PC-3 (cell line): ENCODE measurements at regions of chr12 and their contacts with region 1.

Region 1: DNA sequence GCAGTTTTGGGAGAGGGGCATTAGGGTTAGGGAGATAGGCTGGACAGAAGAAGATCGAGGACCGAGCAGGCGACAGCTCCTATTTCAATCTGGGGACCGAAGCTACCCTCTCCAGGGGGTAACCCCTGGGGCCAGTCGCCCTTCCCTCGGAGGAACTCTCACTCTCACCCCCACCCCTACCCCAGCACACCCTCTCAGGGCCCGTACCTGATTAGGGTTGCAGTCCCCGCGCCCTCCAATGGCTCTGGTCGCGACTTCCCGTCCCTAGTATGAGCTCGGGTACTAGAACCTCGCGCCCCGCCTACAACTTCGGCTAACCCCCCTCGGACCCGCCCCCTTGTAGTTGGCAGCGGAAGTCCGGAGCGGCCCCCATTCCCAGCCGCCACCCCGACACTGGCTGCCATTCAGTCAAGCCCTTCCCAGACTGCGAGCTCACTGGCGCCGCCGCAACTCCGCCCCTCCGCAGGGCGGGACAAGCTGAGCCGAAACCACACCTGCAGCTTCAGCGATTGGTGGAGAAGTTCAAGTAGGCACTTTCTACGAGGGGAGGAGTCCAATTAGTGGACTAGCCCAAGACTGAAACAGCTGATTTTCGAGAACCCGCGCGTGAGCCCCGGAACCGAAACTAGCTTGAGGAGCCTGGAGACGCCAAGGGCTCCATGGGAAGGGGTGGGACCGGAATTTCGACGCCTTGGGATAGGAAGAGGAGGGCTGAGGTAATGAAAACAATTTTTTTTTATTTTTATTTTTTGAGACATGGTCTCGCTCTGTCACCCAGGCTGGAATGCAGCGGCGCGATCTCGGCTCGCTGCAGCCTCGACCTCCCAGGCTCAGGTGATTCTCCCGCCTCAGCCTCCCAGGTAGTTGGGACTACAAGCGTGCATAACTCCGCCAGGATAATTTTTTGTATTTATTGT is at the start of gene STAT2:
- DNase-seq: peak; percentile 99
- ATAC-seq: peak; percentile 97
- H3K4me3 ChIP-seq: peak within 1 kb of the TSS; percentile 85
- H3K27ac ChIP-seq: peak within 1 kb of the TSS; percentile 44
- H3K4me1 ChIP-seq: peaks cover 14% of the 10 kb centered on the region
- H3K27me3 ChIP-seq: no peaks in the 10 kb centered on the region
- CTCF ChIP-seq: no peak
- total RNA-seq, gene STAT2: 68.8 and 73.1 TPM in 2 replicates

Region 2: DNA sequence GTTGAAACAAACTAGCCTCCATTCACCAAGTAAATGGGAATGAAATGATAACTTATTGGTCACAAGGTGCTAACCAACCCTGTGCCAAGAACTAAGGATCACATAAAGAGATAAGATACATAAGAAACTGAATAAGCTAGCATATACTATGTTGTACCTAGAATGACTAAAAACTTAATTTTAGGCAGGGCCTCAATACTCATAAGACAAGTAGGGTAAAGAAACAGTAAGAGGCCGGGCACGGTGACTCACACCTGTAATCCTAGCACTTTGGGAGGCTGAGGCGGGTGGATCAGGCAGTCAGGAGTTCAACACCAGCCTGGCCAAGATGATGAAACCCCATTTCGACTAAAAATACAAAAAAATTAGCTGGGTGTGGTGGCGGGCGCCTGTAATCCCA is 599.4 kb before region 1 on chr12:
- CTCF ChIA-PET with region 1: no interaction called
- POLR2A ChIA-PET with region 1: no interaction called
- intact Hi-C with region 1: no loop called
- DNase-seq: no peak
- ATAC-seq: no peak
- H3K4me3 ChIP-seq: no peak overlapping the region
- H3K27ac ChIP-seq: no peak overlapping the region
- H3K4me1 ChIP-seq: no peaks in the 10 kb centered on the region
- H3K27me3 ChIP-seq: no peaks in the 10 kb centered on the region
- CTCF ChIP-seq: no peak

Region 3: GRCh38 chr12:55829967-55830600 is 530.0 kb before region 1 on chr12:
- CTCF ChIA-PET with region 1: no interaction called
- POLR2A ChIA-PET with region 1: interaction called, 10 read pairs
- intact Hi-C with region 1: no loop called
- DNase-seq: peak; percentile 24
- ATAC-seq: peak; percentile 42
- H3K4me3 ChIP-seq: peak overlapping the region; percentile 83
- H3K27ac ChIP-seq: peak overlapping the region; percentile 66
- H3K4me1 ChIP-seq: peaks cover 24% of the 10 kb centered on the region
- H3K27me3 ChIP-seq: no peaks in the 10 kb centered on the region
- CTCF ChIP-seq: no peak

Region 4: DNA sequence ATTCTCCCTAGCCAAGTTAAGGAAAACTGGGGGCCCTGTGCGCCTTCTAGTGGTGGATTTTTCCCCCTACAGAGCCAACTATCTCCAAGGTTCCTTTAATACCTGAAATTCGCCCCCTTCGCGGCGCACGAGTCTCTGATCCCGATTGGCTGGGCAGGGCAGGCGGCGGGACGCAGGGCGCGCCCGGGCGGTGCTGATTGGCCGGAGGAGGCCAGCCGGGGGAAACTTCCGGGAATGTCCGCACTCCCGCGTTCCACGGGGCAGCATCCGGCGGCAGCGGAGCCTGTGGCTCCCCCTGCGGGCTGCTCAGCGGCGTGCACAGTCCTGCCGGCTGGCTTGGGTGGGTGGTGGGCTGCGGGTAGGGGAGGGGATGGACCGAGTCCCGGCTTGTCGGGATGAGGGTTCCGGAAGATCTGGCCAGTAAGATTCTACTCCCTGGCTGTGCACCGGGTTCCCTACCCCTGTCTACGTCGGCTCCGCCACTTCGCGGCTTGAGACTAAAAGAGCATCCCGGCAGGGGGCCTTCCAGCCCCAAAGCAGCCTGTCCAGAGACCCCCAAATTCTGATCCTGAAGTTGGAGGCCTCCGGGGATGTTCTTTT is 135.9 kb before region 1 on chr12 and contains the start of gene NABP2:
- CTCF ChIA-PET with region 1: no interaction called
- POLR2A ChIA-PET with region 1: interaction called, 11 read pairs
- intact Hi-C with region 1: no loop called
- DNase-seq: peak; percentile 99
- ATAC-seq: peak; percentile 81
- H3K4me3 ChIP-seq: peak within 1 kb of the TSS; percentile 88
- H3K27ac ChIP-seq: peak within 1 kb of the TSS; percentile 21; the same call in 1 of the 2 replicates
- H3K4me1 ChIP-seq: peaks cover 22% of the 10 kb centered on the region
- H3K27me3 ChIP-seq: no peaks in the 10 kb centered on the region
- CTCF ChIP-seq: peak; percentile 94
- total RNA-seq, gene NABP2: 91.6 and 98.6 TPM in 2 replicates

Region 5: GRCh38 chr12:56230432-56231183 is 129.5 kb before region 1 on chr12:
- CTCF ChIA-PET with region 1: interaction called, 12 read pairs
- POLR2A ChIA-PET with region 1: no interaction called
- intact Hi-C with region 1: no loop called
- DNase-seq: no peak
- ATAC-seq: no peak
- H3K4me3 ChIP-seq: no peak overlapping the region
- H3K27ac ChIP-seq: no peak overlapping the region
- H3K4me1 ChIP-seq: peaks cover under 1% of the 10 kb centered on the region; the same call in 1 of the 2 replicates
- H3K27me3 ChIP-seq: no peaks in the 10 kb centered on the region
- CTCF ChIP-seq: no peak

Region 6: DNA sequence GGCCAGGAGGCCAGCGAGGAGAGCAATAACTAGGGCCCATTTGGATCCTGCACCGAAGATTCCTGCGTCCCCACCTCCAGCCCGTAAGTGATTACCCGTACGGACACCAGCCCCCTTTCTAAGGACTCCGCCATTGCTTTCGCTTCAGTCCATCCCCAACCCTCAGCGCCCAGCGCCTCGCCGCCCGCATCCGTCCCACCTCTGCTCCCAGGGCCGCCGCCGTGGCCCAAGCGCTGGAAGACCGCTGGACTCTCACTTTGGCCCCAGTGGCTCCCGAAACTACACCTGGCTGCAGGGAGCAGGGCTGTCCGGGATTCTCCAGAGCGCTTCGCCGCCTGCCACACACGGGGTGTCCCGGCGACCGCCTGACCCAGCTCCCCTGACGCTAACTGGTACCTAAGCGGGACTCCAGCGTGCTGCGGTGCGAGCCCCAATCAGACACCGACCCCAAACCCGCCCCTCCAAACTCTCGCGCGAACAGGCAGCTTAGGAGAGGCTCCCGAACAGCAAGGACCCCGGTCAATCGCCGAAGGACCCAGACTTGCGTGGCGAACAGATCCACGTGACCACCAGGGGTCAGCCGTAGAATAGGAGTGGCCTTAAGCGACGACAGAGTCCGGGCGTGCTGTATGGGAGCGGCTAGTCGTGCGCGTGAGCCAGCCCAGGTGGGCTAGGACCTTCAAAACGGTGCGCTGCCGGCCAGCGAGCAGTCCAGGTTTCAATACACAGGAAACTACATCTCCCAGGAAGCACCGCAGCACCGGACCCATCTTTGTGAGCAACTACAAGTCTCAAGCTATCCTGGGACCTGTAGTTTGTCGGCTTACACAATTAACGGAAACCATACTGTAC is 44.3 kb before region 1 on chr12 and contains the start of gene CNPY2:
- CTCF ChIA-PET with region 1: no interaction called
- POLR2A ChIA-PET with region 1: no interaction called
- intact Hi-C with region 1: loop called (anchors 5 kb)
- DNase-seq: peak; percentile 98
- ATAC-seq: peak; percentile 95
- H3K4me3 ChIP-seq: peak within 1 kb of the TSS; percentile 90
- H3K27ac ChIP-seq: peak within 1 kb of the TSS; percentile 59
- H3K4me1 ChIP-seq: peaks cover 15% of the 10 kb centered on the region
- H3K27me3 ChIP-seq: no peaks in the 10 kb centered on the region
- CTCF ChIP-seq: peak; percentile 44
- total RNA-seq, gene CNPY2: 109 and 162 TPM in 2 replicates

Region 7: GRCh38 chr12:56377310-56377988 is 17.3 kb after region 1 on chr12:
- CTCF ChIA-PET with region 1: interaction called, 4 read pairs
- POLR2A ChIA-PET with region 1: interaction called, 10 read pairs
- intact Hi-C with region 1: no loop called
- DNase-seq: peak; percentile 80
- ATAC-seq: peak; percentile 98
- H3K4me3 ChIP-seq: no peak overlapping the region
- H3K27ac ChIP-seq: no peak overlapping the region
- H3K4me1 ChIP-seq: peaks cover 10% of the 10 kb centered on the region
- H3K27me3 ChIP-seq: no peaks in the 10 kb centered on the region
- CTCF ChIP-seq: peak; percentile 66

Region 8: DNA sequence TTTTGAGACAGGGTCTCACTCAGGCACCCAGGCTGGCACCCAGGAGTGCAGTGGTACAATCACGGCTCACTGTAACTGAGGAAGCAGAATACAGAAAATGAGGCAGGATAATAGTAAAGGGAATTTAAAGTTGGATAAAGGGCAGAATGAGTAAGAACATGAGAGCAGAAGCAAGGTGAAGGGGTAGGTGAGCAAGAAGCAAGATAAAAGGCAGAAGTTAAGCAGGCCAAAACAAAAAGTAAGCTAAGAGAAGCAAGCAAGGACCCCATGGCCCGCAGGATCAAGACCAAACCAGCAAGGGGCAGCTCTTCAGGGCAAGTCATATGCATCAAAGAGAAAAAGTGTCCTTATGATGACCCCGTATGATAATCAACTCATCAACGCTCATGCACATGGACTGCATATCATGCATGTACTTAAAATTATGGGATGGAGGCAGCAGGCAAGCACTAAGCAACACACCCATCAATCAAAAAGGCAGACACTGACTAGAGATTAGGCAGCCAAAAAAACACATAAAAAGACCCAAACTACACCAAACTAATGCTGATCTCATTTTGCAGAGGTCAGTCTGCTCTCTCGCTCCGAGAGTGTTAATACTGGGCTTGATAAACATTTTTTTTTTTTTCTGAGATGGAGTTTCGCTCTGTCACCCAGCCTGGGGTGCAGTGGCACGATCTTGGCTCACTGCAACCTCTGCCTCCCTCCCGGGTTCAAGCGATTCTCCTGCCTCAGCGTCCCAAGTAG is 77.5 kb after region 1 on chr12:
- CTCF ChIA-PET with region 1: no interaction called
- POLR2A ChIA-PET with region 1: interaction called, 57 read pairs
- intact Hi-C with region 1: no loop called
- DNase-seq: no peak
- ATAC-seq: no peak
- H3K4me3 ChIP-seq: no peak overlapping the region
- H3K27ac ChIP-seq: no peak overlapping the region
- H3K4me1 ChIP-seq: no peaks in the 10 kb centered on the region
- H3K27me3 ChIP-seq: no peaks in the 10 kb centered on the region
- CTCF ChIP-seq: no peak